ENCODE measurements at regions of chr6 and their contacts with region 1.

Region 1: DNA sequence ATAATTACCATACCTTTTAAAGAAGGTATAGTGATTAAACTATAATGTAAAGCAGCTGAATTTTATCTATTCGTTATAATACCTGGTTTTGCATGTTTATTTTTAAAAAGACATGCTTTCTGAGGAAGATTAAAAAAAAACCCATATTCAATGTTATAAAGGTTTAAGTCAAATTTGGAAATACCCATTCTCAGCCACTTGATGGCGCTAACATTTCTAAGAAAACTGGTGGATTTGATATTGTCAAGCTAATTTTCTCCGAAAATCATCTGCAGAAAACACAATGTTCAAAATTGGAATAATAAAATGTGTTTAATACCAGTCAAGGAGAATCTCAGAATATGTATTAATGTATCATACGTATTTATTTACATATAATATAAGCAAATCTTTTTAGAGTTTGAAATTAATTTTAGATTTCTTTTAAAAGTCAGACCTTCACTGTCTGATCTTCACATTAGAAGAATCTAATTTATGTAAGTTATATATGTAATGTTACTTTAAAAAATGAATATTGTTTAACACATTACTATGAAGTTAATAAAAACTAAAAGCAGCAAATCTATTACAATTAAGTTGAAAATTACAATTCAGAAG is 35.0 kb downstream of the SHPRH start:
- DNase-seq: peak in 1 of 2 donors; percentile 62
- ATAC-seq: no peak
- H3K4me3 ChIP-seq: no peak overlapping the region
- H3K4me3 Mint-ChIP-seq: no peak overlapping the region
- H3K27ac ChIP-seq: no peak overlapping the region
- H3K27ac Mint-ChIP-seq: no peak overlapping the region
- H3K4me1 ChIP-seq: no peaks in the 10 kb centered on the region
- H3K4me1 Mint-ChIP-seq: no peaks in the 10 kb centered on the region
- H3K27me3 ChIP-seq: no peaks in the 10 kb centered on the region
- H3K27me3 Mint-ChIP-seq: no peaks in the 10 kb centered on the region
- CTCF ChIP-seq: peak; percentile 82

Region 2: DNA sequence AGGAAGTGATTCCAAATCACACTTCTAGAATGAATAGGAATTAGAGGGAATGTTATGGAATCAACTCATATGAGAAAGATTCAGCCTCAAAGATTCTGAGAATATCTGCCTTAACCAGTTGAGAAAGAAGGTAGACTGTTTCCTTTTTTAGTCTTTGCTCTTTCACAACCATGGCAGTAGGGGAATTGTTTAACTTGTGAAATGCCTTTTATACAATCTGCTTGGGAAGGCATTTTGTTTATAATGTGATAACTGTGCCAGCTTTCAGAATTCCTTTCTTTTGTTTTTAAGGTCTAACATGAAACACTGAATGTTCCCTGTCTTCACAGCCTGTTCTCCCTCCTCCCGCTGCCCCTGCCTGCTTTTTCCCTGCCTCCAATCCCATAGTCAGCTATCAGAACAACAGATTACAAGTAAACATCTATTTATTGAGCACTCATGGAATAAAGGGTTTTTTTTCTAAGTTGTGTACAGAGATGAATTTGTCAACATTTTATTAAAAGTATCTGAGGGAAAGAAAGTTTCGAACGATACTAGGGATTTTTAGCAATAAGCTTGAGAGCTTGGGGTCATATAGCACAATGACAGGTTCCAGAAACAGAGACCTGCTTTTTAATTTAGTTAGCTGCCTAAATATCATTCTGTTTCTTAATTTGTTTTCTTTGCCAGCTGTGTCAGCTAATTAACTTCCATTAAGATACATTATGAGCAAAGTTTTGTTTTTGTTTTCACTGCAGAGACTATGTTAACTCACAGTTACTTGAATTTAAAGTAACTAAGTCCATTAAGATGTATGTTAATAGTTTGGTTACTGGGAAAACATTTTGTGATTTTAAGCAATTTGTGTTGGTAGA is 86.2 kb before region 1 on chr6:
- intact Hi-C with region 1: no loop called
- DNase-seq: no peak
- ATAC-seq: no peak
- H3K4me3 ChIP-seq: no peak overlapping the region
- H3K4me3 Mint-ChIP-seq: no peak overlapping the region
- H3K27ac ChIP-seq: no peak overlapping the region
- H3K27ac Mint-ChIP-seq: no peak overlapping the region
- H3K4me1 ChIP-seq: no peaks in the 10 kb centered on the region
- H3K4me1 Mint-ChIP-seq: peaks cover 7% of the 10 kb centered on the region in 2 donors
- H3K27me3 ChIP-seq: no peaks in the 10 kb centered on the region
- H3K27me3 Mint-ChIP-seq: no peaks in the 10 kb centered on the region
- CTCF ChIP-seq: no peak

Region 3: DNA sequence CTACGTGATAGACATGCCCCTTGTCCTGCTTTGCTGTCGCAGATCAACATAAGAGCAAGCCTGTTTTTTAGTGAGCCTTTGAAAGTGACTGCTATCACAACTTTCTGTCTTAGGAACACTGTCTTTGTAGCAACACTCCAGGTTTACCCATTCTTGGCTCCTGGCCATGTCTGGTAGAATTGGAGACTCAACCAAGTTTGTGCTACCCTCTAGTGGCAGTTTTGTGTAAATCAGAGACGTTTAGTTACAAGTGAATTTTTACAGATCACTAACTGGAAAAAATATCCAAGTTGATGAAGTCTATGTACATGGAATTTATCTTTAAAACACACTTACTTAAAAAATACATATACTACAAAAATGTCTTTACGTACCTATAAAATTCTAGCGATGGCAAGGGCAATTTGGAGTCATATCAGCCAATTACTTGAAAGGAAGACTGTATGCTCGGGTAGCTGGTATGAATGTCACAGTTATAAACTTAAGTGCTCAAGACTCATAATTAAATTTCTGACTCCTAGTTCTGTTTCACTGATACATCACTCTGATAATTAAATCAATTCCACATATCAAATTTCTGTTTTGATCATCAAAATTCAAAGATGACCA is 771.0 kb after region 1 on chr6:
- intact Hi-C with region 1: loop called (anchors 10 kb)
- DNase-seq: peak in 1 of 2 donors; percentile 68
- ATAC-seq: no peak
- H3K4me3 ChIP-seq: no peak overlapping the region
- H3K4me3 Mint-ChIP-seq: no peak overlapping the region
- H3K27ac ChIP-seq: no peak overlapping the region
- H3K27ac Mint-ChIP-seq: no peak overlapping the region
- H3K4me1 ChIP-seq: no peaks in the 10 kb centered on the region
- H3K4me1 Mint-ChIP-seq: no peaks in the 10 kb centered on the region
- H3K27me3 ChIP-seq: no peaks in the 10 kb centered on the region
- H3K27me3 Mint-ChIP-seq: no peaks in the 10 kb centered on the region
- CTCF ChIP-seq: peak; percentile 37

Measured in natural killer cell (primary cell).